Activated naive CD4-positive, alpha-beta T cell treated with anti-CD3 and anti-CD28 coated beads for 36 hours (primary cell): ENCODE measurements at regions of chr18 and their contacts with region 1.

Region 1: DNA sequence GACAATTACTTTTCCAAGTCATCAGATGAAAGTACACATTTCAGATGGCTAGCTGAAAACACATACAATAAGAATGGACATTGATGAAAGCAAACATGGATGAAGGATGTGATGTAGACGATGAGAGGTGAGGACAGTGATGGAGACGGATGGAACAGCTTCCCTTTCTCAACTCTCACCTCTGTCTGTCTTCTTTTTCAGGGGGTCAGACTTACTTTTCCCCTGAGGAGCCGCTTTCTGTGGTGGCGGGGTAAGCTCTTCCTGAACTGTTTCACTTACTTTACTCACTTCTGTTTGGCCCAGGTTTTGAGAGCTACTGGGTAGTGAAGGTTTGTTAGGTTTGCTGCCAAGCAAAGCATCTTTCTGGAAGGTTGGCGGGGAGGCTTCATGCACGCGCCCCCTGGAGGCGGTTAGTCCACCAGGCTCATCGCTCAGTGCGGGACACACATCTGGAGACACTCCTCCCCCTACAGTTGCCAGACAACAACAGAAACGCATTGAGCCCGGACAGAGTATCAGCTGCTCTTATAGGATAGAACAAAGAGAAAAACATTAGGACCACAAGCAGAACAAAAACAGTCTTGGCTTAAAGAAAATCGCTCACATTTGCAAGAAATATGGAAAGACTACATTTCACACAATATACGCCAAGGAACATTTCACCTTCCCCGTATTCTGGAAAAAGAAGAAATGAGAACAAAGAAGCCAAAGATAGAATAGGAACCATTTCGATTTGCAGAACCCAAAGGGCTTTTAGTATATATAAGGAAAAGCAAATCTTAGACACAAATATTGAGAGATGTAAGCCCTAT is 90.5 kb downstream of the MYOM1 start:
- DNase-seq: peak; percentile 92
- H3K4me3 Mint-ChIP-seq: no peak overlapping the region
- H3K27ac Mint-ChIP-seq: no peak overlapping the region
- H3K4me1 Mint-ChIP-seq: peaks cover 10% of the 10 kb centered on the region
- H3K27me3 Mint-ChIP-seq: no peaks in the 10 kb centered on the region

Region 2: DNA sequence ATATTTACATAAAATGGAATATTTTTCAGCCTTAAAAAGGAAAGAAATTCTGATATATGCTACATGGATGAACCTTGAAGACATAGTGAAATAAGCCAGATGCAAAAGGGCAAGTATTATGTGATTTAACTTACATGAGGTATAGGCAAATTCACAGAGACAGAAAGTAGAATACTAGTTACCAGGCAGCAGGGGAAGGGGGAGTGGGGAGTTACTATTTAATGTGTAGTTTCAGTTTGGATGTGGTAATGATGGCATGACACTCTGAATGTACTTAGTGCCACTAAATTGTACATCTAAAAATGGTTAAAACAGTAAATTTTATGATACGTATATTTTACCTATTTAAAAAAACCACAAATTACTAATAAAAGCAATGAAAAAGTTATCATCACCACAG is 570.0 kb before region 1 on chr18:
- CTCF ChIA-PET with region 1: no interaction called
- intact Hi-C with region 1: no loop called
- DNase-seq: no peak
- H3K4me3 Mint-ChIP-seq: no peak overlapping the region
- H3K27ac Mint-ChIP-seq: no peak overlapping the region
- H3K4me1 Mint-ChIP-seq: peaks cover 5% of the 10 kb centered on the region
- H3K27me3 Mint-ChIP-seq: no peaks in the 10 kb centered on the region

Region 3: GRCh38 chr18:2846636-2847364 is 282.5 kb before region 1 on chr18 and contains the start of gene EMILIN2:
- CTCF ChIA-PET with region 1: no interaction called
- intact Hi-C with region 1: loop called (anchors 5 kb)
- DNase-seq: peak; percentile 64
- H3K4me3 Mint-ChIP-seq: peak within 1 kb of the TSS; percentile 83
- H3K27ac Mint-ChIP-seq: peak within 1 kb of the TSS; percentile 61
- H3K4me1 Mint-ChIP-seq: peaks cover 18% of the 10 kb centered on the region
- H3K27me3 Mint-ChIP-seq: peaks cover 31% of the 10 kb centered on the region
- total RNA-seq, gene EMILIN2: 12.2 to 13.2 TPM

Region 4: DNA sequence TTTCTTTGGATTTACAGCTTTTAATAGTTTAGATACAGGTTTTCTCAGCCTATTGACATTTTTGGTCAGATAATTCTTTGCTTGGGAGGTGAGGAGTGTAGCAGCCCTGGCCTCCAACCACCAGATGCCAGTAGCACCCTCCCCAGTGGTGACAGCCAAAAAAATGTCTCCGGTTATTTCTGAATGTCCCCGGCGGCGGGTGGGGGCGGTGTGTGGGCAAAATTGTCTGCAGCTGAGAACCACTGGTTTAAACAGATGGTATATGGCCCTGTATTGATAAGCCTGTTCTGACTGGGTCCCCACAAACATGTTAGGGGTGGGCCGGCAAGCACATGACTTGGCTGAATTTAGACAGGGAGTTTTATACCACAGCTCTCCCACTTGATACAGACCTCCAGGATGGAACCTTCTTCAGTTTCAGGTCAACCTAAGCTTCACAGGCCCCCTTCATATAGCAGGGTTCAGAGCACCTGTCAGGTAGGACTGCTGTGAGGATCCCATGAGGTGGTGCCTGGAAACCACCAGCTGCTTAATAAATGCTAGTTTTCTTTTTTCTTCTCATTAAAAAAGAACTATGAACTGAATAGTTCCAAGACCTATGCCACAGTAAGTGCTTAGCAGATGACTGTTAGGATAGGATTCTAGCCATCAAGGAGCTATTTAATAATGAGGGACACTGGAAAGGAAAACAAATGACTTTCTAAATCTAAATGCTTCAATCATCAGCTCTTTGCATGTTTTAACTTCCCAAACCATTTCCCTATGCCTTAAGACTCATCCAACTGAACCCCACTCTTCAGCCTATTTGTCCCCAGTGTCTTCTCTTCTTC is 134.4 kb before region 1 on chr18:
- CTCF ChIA-PET with region 1: interaction called, 57 read pairs
- intact Hi-C with region 1: loop called (anchors 1 kb)
- DNase-seq: peak; percentile 85
- H3K4me3 Mint-ChIP-seq: no peak overlapping the region
- H3K27ac Mint-ChIP-seq: peak overlapping the region; percentile 78
- H3K4me1 Mint-ChIP-seq: peaks cover 91% of the 10 kb centered on the region
- H3K27me3 Mint-ChIP-seq: no peaks in the 10 kb centered on the region

Region 5: DNA sequence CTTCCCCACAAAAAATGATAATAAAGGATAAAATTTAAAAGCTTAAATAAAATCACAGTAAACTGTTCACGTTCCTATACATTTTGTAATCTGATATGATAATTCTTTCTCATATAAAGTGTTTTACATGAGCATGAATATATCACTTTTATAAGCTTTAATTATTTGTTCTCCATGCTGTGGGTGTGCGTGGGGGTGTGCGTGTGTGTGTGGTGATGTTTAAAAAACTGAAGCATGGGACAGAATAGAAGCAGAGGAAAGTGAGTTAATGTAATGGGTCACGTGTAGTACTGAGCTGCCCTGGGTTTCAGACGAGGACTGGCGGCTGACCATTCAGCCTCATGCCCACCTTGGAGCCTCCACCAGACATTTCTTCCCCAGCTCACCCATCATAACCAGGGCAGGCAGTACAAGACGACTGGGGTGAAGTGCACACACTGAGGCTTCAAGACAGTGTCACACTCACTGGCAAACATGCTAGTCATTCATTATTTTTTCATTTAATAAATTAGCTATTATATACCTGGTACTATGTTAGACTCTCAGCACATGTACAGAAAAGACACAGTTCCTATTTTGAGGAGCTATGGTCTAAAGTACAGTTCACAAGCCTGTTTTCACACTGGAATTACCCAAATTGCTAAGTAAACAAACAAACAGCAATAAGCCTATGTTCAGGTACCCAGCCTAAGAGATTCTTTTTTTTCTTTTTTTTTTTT is 19.1 kb before region 1 on chr18:
- CTCF ChIA-PET with region 1: interaction called, 16 read pairs
- intact Hi-C with region 1: no loop called
- DNase-seq: no peak
- H3K4me3 Mint-ChIP-seq: no peak overlapping the region
- H3K27ac Mint-ChIP-seq: no peak overlapping the region
- H3K4me1 Mint-ChIP-seq: no peaks in the 10 kb centered on the region
- H3K27me3 Mint-ChIP-seq: no peaks in the 10 kb centered on the region

Region 6: DNA sequence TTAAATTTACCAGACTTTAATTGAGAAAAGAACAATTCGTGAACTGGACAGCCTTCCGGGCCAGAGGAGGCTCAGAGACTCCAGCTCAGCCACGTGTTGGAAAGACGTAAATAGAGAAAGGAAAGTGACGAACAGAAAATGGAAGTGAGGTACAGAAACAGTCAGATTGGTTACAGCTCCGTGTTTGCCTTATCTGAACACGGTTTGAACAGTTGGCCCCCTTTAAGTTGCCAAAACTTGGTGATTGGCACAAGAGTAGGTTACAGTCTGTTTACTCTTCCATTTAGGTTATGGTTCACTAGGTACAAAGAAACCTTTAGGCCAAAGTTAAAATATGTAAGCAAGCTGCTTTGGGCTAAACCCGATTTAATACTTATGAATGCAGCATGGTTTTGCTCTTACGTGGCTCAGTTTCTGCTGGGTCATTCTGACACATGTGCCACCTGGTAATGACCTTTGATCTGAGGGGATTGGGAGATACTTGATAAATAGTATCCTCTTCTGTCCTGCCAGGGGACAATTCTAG is 255.5 kb after region 1 on chr18:
- CTCF ChIA-PET with region 1: no interaction called
- intact Hi-C with region 1: no loop called
- DNase-seq: no peak
- H3K4me3 Mint-ChIP-seq: no peak overlapping the region
- H3K27ac Mint-ChIP-seq: no peak overlapping the region
- H3K4me1 Mint-ChIP-seq: peaks cover 6% of the 10 kb centered on the region
- H3K27me3 Mint-ChIP-seq: no peaks in the 10 kb centered on the region

Region 7: DNA sequence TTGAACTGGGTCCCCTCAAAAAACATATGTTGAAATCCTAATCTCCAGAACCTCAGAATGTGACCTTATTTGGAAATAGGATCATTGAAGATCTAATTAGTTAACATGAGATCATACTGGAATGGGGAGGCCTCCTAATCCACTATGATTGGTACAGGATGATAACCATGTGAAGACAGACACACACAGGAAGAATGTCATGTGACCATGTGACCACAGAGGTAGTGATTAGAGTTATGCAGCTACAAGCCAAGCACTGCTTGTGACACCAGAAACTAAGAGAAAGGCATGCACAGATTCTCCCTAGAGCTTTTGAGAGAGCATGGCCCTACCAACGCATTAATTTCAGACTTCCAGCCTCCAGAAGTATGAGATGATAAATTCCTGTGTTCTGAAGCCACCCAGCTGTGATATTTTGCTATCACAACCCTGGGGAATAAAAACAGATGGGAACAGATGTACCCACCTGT is 273.8 kb after region 1 on chr18:
- CTCF ChIA-PET with region 1: no interaction called
- intact Hi-C with region 1: no loop called
- DNase-seq: peak; percentile 9
- H3K4me3 Mint-ChIP-seq: no peak overlapping the region
- H3K27ac Mint-ChIP-seq: no peak overlapping the region
- H3K4me1 Mint-ChIP-seq: peaks cover 24% of the 10 kb centered on the region
- H3K27me3 Mint-ChIP-seq: no peaks in the 10 kb centered on the region

Region 8: GRCh38 chr18:3703732-3704176 is 574.5 kb after region 1 on chr18:
- CTCF ChIA-PET with region 1: interaction called, 10 read pairs
- intact Hi-C with region 1: no loop called
- DNase-seq: peak; percentile 57
- H3K4me3 Mint-ChIP-seq: no peak overlapping the region
- H3K27ac Mint-ChIP-seq: no peak overlapping the region
- H3K4me1 Mint-ChIP-seq: peaks cover 3% of the 10 kb centered on the region
- H3K27me3 Mint-ChIP-seq: peaks cover 32% of the 10 kb centered on the region

Region 9: DNA sequence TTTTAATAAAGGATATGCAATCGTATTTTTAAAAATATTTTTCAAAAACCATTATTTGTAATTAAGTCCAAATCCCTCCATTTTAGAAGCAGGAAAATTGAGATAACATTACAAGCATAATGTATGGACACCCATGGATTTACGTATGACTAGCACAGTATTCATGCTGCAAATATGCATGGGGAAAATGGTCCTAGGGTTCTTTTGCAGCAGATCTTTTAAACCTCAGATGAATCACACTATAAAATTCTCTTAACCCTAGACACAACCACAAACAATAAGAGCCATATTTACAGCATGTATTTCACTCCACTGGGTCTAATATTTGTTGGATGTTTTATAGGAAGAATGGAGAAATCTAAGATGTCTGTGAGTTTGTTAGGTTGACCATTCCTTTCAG is 774.1 kb after region 1 on chr18:
- CTCF ChIA-PET with region 1: no interaction called
- intact Hi-C with region 1: no loop called
- DNase-seq: no peak
- H3K4me3 Mint-ChIP-seq: no peak overlapping the region
- H3K27ac Mint-ChIP-seq: no peak overlapping the region
- H3K4me1 Mint-ChIP-seq: no peaks in the 10 kb centered on the region
- H3K27me3 Mint-ChIP-seq: peaks cover 7% of the 10 kb centered on the region